ENCODE measurements at regions of chr12 and their contacts with region 1.

Region 1: GRCh38 chr12:109804820-109805761 is 28.1 kb downstream of the TRPV4 start:
- DNase-seq: peak; percentile 74
- H3K4me3 Mint-ChIP-seq: no peak overlapping the region
- H3K27ac Mint-ChIP-seq: no peak overlapping the region
- H3K4me1 Mint-ChIP-seq: no peaks in the 10 kb centered on the region
- H3K27me3 Mint-ChIP-seq: no peaks in the 10 kb centered on the region

Region 2: GRCh38 chr12:109789526-109790048 is 15.5 kb before region 1 on chr12:
- CTCF ChIA-PET with region 1: interaction called, 10 read pairs
- intact Hi-C with region 1: no loop called
- DNase-seq: no peak
- H3K4me3 Mint-ChIP-seq: no peak overlapping the region
- H3K27ac Mint-ChIP-seq: no peak overlapping the region
- H3K4me1 Mint-ChIP-seq: no peaks in the 10 kb centered on the region
- H3K27me3 Mint-ChIP-seq: peaks cover 8% of the 10 kb centered on the region

Region 3: GRCh38 chr12:109844983-109845823 is 40.1 kb after region 1 on chr12:
- CTCF ChIA-PET with region 1: interaction called, 103 read pairs
- intact Hi-C with region 1: loop called (anchors 1 kb)
- DNase-seq: peak; percentile 92
- H3K4me3 Mint-ChIP-seq: peak overlapping the region; percentile 30
- H3K27ac Mint-ChIP-seq: no peak overlapping the region
- H3K4me1 Mint-ChIP-seq: peaks cover 2% of the 10 kb centered on the region
- H3K27me3 Mint-ChIP-seq: no peaks in the 10 kb centered on the region

Region 4: GRCh38 chr12:109858764-109859163 is 53.7 kb after region 1 on chr12:
- CTCF ChIA-PET with region 1: interaction called, 12 read pairs
- intact Hi-C with region 1: no loop called
- DNase-seq: no peak
- H3K4me3 Mint-ChIP-seq: no peak overlapping the region
- H3K27ac Mint-ChIP-seq: peak overlapping the region; percentile 65
- H3K4me1 Mint-ChIP-seq: no peaks in the 10 kb centered on the region
- H3K27me3 Mint-ChIP-seq: no peaks in the 10 kb centered on the region

Region 5: DNA sequence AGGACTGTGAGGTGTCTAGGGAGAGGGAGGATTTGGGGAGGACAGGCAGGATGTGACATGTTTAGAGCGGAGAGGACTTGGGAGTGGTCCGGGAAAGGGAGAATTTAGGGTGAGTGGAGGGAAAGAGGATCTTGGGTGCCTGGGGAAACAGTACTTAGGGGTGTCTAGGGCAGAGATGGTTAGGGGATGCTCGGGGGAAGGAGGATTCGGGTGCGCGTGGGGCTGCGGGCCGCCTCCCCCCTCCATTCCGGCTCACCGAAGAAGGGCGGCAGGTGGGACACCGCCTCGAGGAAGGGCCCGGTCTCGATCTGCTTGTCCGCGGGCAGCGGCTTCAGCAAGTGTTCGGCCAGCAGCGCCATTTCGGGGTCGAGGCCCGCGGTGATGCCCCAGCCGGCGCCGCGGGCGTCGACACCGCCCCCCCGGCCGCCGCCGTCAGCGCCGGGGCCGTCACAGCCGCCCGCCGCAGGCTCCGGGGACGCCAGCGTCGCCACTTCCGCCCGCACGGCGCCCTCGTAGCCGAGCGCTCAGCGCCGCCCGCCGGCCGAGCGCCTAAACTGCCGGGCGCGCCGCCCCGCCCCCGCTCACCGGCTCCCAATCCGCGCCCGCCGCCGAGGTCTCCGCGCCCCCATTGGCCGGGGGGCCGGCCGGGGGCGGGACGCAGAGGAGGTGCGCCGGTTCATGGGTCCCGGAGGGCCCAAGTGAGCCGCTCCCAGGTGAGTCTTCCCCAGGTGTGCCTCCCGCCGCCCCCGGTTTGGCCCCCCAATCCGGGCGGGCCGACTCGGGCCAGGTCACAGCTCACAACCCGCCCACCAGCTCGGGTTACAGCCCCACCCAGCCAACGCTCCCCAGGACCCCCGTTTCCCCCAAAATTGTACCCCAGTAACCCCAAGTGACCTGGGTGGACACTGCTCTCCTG is 75.2 kb after region 1 on chr12 and contains the start of gene GLTP:
- CTCF ChIA-PET with region 1: interaction called, 4 read pairs
- intact Hi-C with region 1: loop called (anchors 1 kb)
- DNase-seq: peak; percentile 86
- H3K4me3 Mint-ChIP-seq: peak within 1 kb of the TSS; percentile 93
- H3K27ac Mint-ChIP-seq: peak within 1 kb of the TSS; percentile 66
- H3K4me1 Mint-ChIP-seq: peaks cover 42% of the 10 kb centered on the region
- H3K27me3 Mint-ChIP-seq: no peaks in the 10 kb centered on the region
- total RNA-seq, gene GLTP: 18.1 to 19.9 TPM

Region 6: DNA sequence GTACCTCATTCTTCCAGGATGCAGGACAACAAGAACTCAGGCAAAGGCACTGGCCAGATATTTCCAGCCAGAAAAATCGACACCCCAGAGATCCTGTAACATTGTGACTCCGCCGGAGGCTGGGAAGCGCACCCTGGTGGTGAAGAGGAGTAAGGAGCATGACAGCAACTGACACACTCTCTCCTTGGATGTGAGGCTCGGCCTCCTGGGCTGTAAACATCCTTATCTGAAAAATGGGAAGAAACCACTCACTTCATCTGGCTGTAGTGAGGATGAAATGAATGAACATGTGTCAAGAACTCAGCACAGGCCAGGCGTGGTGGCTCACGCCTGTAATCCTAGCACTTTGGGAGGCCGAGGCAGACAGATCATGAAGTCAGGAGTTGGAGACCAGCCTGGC is 122.5 kb after region 1 on chr12:
- CTCF ChIA-PET with region 1: no interaction called
- intact Hi-C with region 1: loop called (anchors 1 kb)
- DNase-seq: peak; percentile 57
- H3K4me3 Mint-ChIP-seq: no peak overlapping the region
- H3K27ac Mint-ChIP-seq: no peak overlapping the region
- H3K4me1 Mint-ChIP-seq: no peaks in the 10 kb centered on the region
- H3K27me3 Mint-ChIP-seq: no peaks in the 10 kb centered on the region

Measured in activated naive CD4-positive, alpha-beta T cell treated with anti-CD3 and anti-CD28 coated beads for 36 hours (primary cell).